Stomach (tissue), 19 donors: ENCODE measurements at regions of chr14 and their contacts with region 1.

Region 1: DNA sequence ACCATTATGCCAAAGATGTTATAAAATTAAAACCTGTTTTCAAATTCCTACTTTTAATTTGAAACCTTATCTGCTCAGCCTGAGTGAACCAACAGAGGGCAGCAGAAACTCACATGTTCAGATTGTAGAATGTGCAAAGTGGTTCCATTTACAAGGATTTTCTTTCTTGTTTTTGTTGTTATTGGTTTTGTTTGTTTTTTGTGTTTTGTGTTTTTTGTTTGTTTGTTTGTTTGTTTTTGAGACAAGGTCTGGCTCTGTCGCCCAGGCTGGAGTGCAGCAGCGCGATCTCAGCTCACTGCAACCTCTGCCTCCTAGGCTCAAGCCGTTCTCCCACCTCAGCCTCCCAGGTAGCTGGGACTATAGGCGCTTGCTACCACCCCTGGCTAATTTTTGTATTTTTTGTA is 22.8 kb upstream of the GARIN2 start:
- DNase-seq: peak in 1 of 2 donors; percentile 77
- H3K4me3 ChIP-seq: no peak overlapping the region
- H3K27ac ChIP-seq: no peak overlapping the region
- H3K4me1 ChIP-seq: no peaks in the 10 kb centered on the region
- H3K27me3 ChIP-seq: no peaks in the 10 kb centered on the region
- CTCF ChIP-seq: peak in 5 of 7 experiments; percentile 64 to 82 (median 66)
- EP300 ChIP-seq: no peak
- POLR2A ChIP-seq: no peak

Region 2: GRCh38 chr14:67285876-67286452 is 119.5 kb after region 1 on chr14:
- intact Hi-C with region 1: loop called (anchors 5 kb)
- DNase-seq: peak in 1 of 2 donors; percentile 67
- H3K4me3 ChIP-seq: no peak overlapping the region
- H3K27ac ChIP-seq: no peak overlapping the region
- H3K4me1 ChIP-seq: peaks cover 0 to 20% (median 6%) of the 10 kb centered on the region in 4 donors
- H3K27me3 ChIP-seq: no peaks in the 10 kb centered on the region
- CTCF ChIP-seq: peak in 3 of 7 experiments; percentile 45 to 62 (median 53)
- EP300 ChIP-seq: no peak
- POLR2A ChIP-seq: no peak